Activated T-helper 2 cell treated with anti-CD3 and anti-CD28 coated beads, Interferon-gamma antibody, Interleukin-2, Interleukin-4, amounts not matched to agents 10 μg/mL and 5 μg/mL and 100 μg/mL, durations not matched to agents 14 hours and 24 hours and 36 hours (primary cell): ENCODE measurements at regions of chr1 and their contacts with region 1.

Region 1: GRCh38 chr1:76254104-76255030 is 179.8 kb downstream of the ST6GALNAC3 start:
- DNase-seq: no peak
- H3K4me3 Mint-ChIP-seq: no peak overlapping the region
- H3K27ac Mint-ChIP-seq: peak overlapping the region; percentile 4
- H3K4me1 Mint-ChIP-seq: peaks cover 37% of the 10 kb centered on the region
- H3K27me3 Mint-ChIP-seq: no peaks in the 10 kb centered on the region

Region 2: GRCh38 chr1:76269155-76269554 is 14.8 kb after region 1 on chr1:
- intact Hi-C with region 1: loop called (anchors 1 kb)
- DNase-seq: no peak
- H3K4me3 Mint-ChIP-seq: peak overlapping the region; percentile 53
- H3K27ac Mint-ChIP-seq: no peak overlapping the region
- H3K4me1 Mint-ChIP-seq: peaks cover 55% of the 10 kb centered on the region
- H3K27me3 Mint-ChIP-seq: peaks cover 8% of the 10 kb centered on the region

Region 3: GRCh38 chr1:76302711-76303339 is 48.5 kb after region 1 on chr1:
- intact Hi-C with region 1: no loop called
- DNase-seq: no peak
- H3K4me3 Mint-ChIP-seq: no peak overlapping the region
- H3K27ac Mint-ChIP-seq: no peak overlapping the region
- H3K4me1 Mint-ChIP-seq: peaks cover 19% of the 10 kb centered on the region
- H3K27me3 Mint-ChIP-seq: peaks cover 2% of the 10 kb centered on the region

Region 4: DNA sequence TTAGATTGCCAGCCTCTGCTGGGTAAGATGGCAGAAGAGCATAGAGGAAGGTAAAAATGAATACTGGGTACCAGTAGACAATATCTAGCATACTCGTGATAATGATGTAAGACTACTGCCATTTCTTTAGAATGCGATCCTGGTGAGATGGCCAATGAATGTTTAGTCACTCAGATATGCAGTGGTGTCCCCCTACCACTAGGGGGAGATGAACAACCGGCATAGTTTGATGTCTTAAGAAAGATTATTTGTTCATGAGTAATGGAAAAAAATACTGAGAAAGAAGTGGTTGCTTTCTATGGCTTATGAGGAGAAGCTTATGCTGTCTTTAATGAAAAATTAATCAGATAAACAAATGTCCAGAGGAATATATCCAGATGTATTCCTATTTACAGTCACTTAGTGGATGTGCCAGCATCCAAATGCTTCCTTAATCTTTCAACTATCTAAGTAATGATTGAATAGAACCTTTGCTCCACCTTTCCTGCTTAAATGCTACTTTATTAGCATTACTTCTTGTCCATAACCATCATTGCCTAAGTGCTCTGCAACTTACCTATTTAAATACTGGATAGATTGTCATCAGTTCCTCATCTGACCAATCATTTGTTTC is 76.7 kb after region 1 on chr1:
- intact Hi-C with region 1: loop called (anchors 5 kb)
- DNase-seq: peak; percentile 19
- H3K4me3 Mint-ChIP-seq: no peak overlapping the region
- H3K27ac Mint-ChIP-seq: no peak overlapping the region
- H3K4me1 Mint-ChIP-seq: peaks cover 4% of the 10 kb centered on the region
- H3K27me3 Mint-ChIP-seq: peaks cover 4% of the 10 kb centered on the region